Cardiac septum (tissue), 1 donor: ENCODE measurements at regions of chr9 and their contacts with region 1.

Region 1: DNA sequence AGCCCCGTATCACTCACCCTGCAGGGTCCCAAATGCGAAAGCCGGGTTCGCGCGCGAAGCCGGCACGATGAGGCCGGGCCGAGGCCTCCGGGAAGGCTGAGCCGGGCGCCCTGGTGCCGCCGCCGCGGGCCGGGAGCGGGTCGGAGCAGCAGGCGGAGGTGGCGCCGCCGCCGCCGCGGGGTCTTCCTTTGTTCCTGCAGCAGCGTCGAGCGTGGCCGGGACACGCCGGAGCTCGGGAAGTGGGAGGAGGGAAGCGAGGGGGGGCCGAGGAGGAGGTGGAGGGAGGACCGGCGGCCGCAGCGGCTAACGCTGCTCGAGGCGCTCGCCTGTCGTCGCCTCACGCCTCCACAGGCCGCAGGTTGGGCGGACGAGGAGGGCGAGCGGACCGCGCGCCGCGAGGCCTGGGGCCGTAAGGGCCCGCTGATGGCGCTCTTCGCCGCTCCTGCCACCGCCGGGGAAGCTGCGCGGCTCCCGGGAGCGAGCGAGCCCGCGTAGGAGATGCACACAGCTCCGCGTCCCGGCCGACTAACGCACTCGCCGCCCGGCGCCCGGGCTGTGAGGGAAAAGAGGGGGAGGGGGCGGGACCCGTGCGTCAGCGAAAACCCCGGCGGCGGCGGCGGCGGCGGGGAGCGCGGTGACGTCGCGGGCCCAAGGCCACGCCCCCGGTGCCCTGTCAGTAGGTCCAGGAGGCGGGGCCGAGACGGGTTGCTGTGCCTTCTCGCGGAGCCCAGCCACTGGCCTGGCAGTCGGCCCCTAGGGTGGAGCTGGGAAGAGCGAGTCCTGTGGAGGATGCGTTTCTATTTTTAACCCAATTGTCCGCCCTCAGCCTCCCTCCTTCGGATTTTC is at the start of gene ZFAND5:
- DNase-seq: peak; percentile 99
- total RNA-seq, gene ZFAND5: 188 TPM

Region 2: GRCh38 chr9:72305102-72305546 is 59.8 kb before region 1 on chr9:
- intact Hi-C with region 1: loop called (anchors 2 kb)
- DNase-seq: peak; percentile 90

Region 3: DNA sequence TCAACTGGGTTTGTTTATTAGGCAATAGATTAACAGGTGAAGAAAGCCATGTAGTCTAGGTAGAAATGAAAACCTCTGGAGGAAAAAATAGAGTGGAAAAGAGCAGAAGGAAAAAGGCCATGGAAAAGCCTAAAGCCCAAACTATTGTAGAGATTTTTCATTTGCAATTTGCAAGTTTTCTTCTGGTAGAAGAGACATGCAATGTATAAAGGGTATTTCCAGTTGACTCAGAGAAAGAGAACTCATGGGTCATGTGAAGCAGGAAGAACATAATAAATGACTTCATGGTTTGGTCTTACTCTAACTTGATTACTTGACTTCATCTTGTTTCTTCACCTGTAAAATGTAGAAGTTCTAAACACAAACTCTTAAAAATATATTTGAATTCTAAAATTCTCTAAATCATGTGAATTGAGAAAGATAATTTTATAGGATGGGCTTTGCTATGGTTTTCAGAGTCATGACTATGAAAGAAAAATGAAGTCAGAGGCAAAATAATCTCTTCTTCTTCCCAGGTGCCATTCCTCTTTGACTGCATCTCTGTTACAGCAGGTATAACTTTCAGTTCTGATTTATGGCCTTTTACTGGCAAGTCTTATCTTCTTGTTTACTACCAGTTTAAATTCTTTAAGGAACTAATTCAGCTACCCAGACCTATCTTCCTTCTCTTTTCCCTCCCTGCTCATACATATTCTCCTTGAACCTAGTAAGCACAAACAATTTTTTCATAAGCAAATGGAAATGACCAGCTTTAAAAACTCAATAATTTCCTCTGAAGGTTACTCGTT is 108.8 kb after region 1 on chr9:
- intact Hi-C with region 1: no loop called
- DNase-seq: no peak

Region 4: GRCh38 chr9:72577212-72577753 is 212.4 kb after region 1 on chr9:
- intact Hi-C with region 1: loop called (anchors 5 kb)
- DNase-seq: no peak